HEK293 (cell line): ENCODE measurements at regions of chr16 and their contacts with region 1.

Region 1: DNA sequence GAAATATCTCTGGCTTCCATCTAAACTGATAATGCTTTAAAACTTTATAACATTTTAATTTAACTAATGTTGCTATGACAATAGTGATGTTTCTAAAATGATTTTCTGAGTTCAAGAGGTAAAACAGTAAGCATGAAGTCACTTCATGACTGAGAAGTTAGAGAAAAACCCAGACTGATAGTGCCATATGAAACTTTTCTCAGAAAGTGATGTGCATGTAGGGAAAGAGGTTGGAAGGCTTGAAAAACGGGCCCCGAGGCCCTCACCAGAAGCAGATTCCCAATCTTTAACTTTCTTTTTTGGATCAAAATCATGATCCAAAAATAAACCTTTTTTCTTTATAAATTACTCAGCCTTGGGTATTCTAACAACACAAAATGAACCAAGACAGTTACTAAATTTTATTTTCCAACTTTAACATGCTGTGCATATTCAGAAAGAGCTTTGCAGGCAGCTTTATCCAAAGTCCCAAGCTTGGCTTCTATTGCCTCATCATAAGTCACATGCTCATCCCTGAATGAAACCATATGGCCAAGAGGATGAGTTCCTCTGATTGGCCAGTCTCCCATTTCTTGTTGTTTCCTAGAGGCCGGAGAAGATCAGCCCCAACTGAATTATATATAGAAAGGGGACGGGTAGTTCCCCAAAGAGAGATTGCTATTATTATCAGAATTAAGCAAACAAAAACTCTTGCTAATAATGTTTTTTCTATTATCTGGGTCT is 357.6 kb upstream of the SALL1 start:
- H3K4me3 ChIP-seq: no peak overlapping the region
- H3K27ac ChIP-seq: no peak overlapping the region
- H3K4me1 ChIP-seq: no peaks in the 10 kb centered on the region
- CTCF ChIP-seq: no peak

Region 2: GRCh38 chr16:51636920-51637769 is 128.5 kb after region 1 on chr16:
- CTCF ChIA-PET with region 1: no interaction called
- POLR2A ChIA-PET with region 1: no interaction called
- H3K4me3 ChIP-seq: no peak overlapping the region
- H3K27ac ChIP-seq: no peak overlapping the region
- H3K4me1 ChIP-seq: peaks cover 5% of the 10 kb centered on the region; the same call in 1 of the 2 replicates
- CTCF ChIP-seq: no peak

Region 3: GRCh38 chr16:51705142-51705541 is 196.5 kb after region 1 on chr16:
- CTCF ChIA-PET with region 1: no interaction called
- POLR2A ChIA-PET with region 1: interaction called, 11 read pairs
- H3K4me3 ChIP-seq: no peak overlapping the region
- H3K27ac ChIP-seq: no peak overlapping the region
- H3K4me1 ChIP-seq: no peaks in the 10 kb centered on the region
- CTCF ChIP-seq: no peak